ENCODE measurements at regions of chr17 and their contacts with region 1.

Region 1: GRCh38 chr17:51166197-51166986 is at the start of gene NME2:
- DNase-seq: peak; percentile 89
- ATAC-seq: peak; percentile 91
- H3K4me3 ChIP-seq: peak within 1 kb of the TSS; percentile 70 to 96 (median 88)
- H3K27ac ChIP-seq: peak within 1 kb of the TSS; percentile 80
- H3K4me1 ChIP-seq: peaks cover 32% of the 10 kb centered on the region
- H3K27me3 ChIP-seq: no peaks in the 10 kb centered on the region
- CTCF ChIP-seq: peak; percentile 50
- EP300 ChIP-seq: no peak
- POLR2A ChIP-seq: peak; percentile 90 to 93
- RAD21 ChIP-seq: peak; percentile 42; the same call in 1 of the 2 replicates
- total RNA-seq, gene NME2: 1,213 and 1,462 TPM in 2 replicates

Region 2: DNA sequence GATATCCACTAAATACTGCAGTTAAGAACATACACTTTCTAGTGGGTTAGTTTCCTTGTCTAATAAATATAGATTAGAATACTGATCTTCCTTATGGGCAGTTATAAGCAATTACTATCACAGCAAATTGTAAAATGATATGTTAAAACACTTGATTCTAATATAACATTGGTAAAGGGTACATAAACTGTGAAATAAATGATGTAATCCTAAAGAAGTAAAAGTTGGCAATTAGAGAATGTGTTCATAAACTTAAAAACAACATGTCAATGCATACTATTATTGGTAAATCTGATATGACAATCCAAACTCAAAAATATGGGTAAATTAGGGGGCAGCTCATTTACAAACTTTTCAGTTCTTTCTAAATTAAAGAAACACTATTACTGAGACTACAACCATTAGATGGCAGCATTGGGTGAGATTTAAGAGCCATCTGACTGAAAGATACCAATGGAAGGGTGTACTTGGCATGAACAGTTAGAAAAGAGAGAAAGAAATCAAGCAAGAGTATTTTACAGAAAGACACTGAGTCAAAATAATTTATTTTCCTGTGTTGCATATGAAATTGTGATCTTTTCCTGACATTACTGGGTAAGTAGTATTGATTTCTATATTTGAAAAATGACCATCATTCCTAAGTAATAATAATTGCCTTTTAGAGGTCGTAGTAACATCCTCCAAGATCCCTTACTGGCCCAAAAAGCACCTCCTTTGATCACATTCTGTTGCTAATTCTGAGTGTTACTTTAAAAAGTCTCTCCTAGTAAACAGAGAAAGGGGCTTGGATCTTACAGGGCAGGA is 165.4 kb before region 1 on chr17:
- CTCF ChIA-PET with region 1: interaction called, 5 read pairs
- POLR2A ChIA-PET with region 1: no interaction called
- in situ Hi-C with region 1: no loop called
- intact Hi-C with region 1: loop called (anchors 5 kb)
- DNase-seq: peak; percentile 71
- ATAC-seq: peak; percentile 79
- H3K4me3 ChIP-seq: no peak overlapping the region
- H3K27ac ChIP-seq: no peak overlapping the region
- H3K4me1 ChIP-seq: peaks cover 11% of the 10 kb centered on the region
- H3K27me3 ChIP-seq: no peaks in the 10 kb centered on the region
- CTCF ChIP-seq: peak; percentile 67
- EP300 ChIP-seq: no peak
- POLR2A ChIP-seq: no peak
- RAD21 ChIP-seq: no peak; the same call in 1 of the 2 replicates

Region 3: DNA sequence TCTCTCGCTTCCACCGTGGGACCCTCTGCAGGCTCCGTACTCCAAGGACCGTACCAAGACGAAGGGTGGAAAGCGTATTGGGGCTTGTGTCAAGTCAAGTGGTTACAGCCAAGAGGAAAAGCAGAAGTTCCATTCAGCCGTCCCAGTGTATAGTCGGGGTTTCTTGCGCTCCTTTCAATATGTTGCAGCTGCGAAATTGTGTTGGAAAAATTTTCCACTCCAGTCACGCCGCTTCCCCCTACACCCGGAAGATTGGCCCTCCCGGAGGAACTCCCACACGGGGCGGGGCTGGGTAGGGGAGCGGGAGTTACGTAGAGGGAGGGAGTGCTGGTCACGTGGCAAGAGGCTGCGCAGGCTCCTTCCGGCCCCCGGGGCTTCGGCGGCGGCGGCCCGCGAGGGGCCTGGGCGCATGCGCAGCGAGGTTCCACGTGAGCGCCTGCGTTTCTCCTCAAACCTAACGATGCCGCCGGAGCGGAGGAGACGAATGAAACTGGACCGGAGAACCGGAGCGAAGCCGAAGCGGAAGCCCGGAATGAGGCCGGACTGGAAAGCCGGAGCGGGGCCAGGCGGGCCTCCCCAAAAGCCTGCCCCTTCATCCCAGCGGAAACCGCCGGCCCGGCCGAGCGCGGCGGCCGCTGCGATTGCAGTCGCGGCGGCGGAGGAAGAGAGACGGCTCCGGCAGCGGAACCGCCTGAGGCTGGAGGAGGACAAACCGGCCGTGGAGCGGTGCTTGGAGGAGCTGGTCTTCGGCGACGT is 93.9 kb after region 1 on chr17 and contains the start of gene UTP18:
- CTCF ChIA-PET with region 1: no interaction called
- POLR2A ChIA-PET with region 1: interaction called, 3 read pairs
- in situ Hi-C with region 1: no loop called
- intact Hi-C with region 1: loop called (anchors 2 kb)
- DNase-seq: peak; percentile 98
- ATAC-seq: peak; percentile 76
- H3K4me3 ChIP-seq: peak within 1 kb of the TSS; percentile 94 to 96 (median 96)
- H3K27ac ChIP-seq: peak within 1 kb of the TSS; percentile 99
- H3K4me1 ChIP-seq: peaks cover 67% of the 10 kb centered on the region
- H3K27me3 ChIP-seq: no peaks in the 10 kb centered on the region; a peak in 1 of 5 replicates
- CTCF ChIP-seq: no peak
- EP300 ChIP-seq: no peak; a peak in 1 of 4 replicates
- POLR2A ChIP-seq: peak; percentile 30 to 75; a peak in 3 of 4 replicates
- RAD21 ChIP-seq: no peak; the same call in none of the 2 replicates
- total RNA-seq, gene UTP18: 104 and 151 TPM in 2 replicates

Region 4: GRCh38 chr17:51818777-51819176 is 652.4 kb after region 1 on chr17:
- CTCF ChIA-PET with region 1: no interaction called
- POLR2A ChIA-PET with region 1: no interaction called
- in situ Hi-C with region 1: no loop called
- intact Hi-C with region 1: no loop called
- DNase-seq: no peak
- ATAC-seq: no peak
- H3K4me3 ChIP-seq: no peak overlapping the region
- H3K27ac ChIP-seq: no peak overlapping the region
- H3K4me1 ChIP-seq: no peaks in the 10 kb centered on the region
- H3K27me3 ChIP-seq: no peaks in the 10 kb centered on the region
- CTCF ChIP-seq: no peak
- EP300 ChIP-seq: no peak
- POLR2A ChIP-seq: no peak
- RAD21 ChIP-seq: no peak

Measured in HepG2 (cell line).